B cell (primary cell): ENCODE measurements at regions of chr19 and their contacts with region 1.

Region 1: DNA sequence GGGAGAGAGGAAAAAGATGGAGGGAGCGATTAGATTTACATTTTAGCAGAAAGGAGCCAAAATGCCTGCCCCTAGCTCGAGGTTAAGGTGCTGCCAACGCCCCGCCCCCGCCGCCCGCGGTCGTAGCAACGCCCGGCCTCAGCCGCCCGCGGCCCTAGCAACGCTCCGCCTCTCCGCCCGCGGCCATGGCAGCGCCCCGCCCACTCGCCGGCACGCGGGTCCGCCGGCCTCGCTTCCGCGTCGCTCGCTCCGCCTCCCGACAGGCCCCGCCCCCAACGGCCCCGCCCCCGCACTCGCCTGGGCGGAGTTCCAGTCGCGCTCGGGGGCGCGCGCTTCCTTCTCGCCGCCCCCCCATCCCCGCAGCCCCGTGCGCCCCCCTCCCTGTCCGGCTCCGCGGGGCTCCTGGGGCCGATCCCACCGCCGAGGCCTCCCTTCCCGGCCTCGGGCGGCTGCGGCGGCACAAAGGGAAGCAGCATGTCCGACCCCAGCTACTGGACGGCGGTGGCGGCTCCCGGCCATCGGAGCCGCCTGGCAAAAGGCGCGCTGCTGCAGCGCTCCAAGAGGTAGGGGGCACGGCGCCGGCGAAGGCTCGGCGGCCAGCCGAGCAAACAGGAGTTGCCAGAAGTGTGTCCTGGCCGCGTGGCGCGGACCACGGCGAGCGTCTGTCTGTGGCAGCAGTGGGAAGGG is 20.3 kb downstream of the MAST3 start:
- DNase-seq: peak; percentile 96
- ATAC-seq: peak; percentile 94
- H3K4me3 ChIP-seq: peak overlapping the region in 4 of 5 experiments; percentile 64 to 71 (median 66)
- H3K4me3 Mint-ChIP-seq: peak overlapping the region; percentile 86
- H3K27ac ChIP-seq: peak overlapping the region; percentile 47 to 76
- H3K27ac Mint-ChIP-seq: peak overlapping the region; percentile 85
- H3K4me1 ChIP-seq: peaks cover 30 to 36% of the 10 kb centered on the region in 2 donors
- H3K4me1 Mint-ChIP-seq: peaks cover 52% of the 10 kb centered on the region
- H3K27me3 ChIP-seq: no peaks in the 10 kb centered on the region
- H3K27me3 Mint-ChIP-seq: no peaks in the 10 kb centered on the region
- CTCF ChIP-seq: no peak

Region 2: GRCh38 chr19:18102916-18103542 is 14.8 kb before region 1 on chr19:
- CTCF ChIA-PET with region 1: interaction called, 22 read pairs
- POLR2A ChIA-PET with region 1: interaction called, 6 read pairs
- intact Hi-C with region 1: loop called (anchors 2 kb)
- DNase-seq: no peak
- ATAC-seq: no peak
- H3K4me3 ChIP-seq: no peak overlapping the region
- H3K4me3 Mint-ChIP-seq: peak overlapping the region; percentile 60
- H3K27ac ChIP-seq: peak overlapping the region in 1 of 2 donors; percentile 71
- H3K27ac Mint-ChIP-seq: peak overlapping the region; percentile 29
- H3K4me1 ChIP-seq: peaks cover 46 to 78% of the 10 kb centered on the region in 2 donors
- H3K4me1 Mint-ChIP-seq: peaks cover 67% of the 10 kb centered on the region
- H3K27me3 ChIP-seq: no peaks in the 10 kb centered on the region
- H3K27me3 Mint-ChIP-seq: no peaks in the 10 kb centered on the region
- CTCF ChIP-seq: no peak